Caco-2 (cell line): ENCODE measurements at regions of chr2 and their contacts with region 1.

Region 1: GRCh38 chr2:18378020-18378653 is 182.3 kb downstream of the RDH14 start:
- DNase-seq: peak; percentile 44 to 65
- H3K4me3 ChIP-seq: no peak overlapping the region
- H3K4me3 Mint-ChIP-seq: no peak overlapping the region
- H3K27ac Mint-ChIP-seq: no peak overlapping the region
- H3K4me1 ChIP-seq: 0 out of 2 replicates have a peak, but pooled peaks cover 4% of the 10 kb centered on the region
- H3K4me1 Mint-ChIP-seq: no peaks in the 10 kb centered on the region
- H3K27me3 ChIP-seq: no peaks in the 10 kb centered on the region
- H3K27me3 Mint-ChIP-seq: peaks cover 3% of the 10 kb centered on the region
- CTCF ChIP-seq: peak; percentile 82 to 91

Region 2: DNA sequence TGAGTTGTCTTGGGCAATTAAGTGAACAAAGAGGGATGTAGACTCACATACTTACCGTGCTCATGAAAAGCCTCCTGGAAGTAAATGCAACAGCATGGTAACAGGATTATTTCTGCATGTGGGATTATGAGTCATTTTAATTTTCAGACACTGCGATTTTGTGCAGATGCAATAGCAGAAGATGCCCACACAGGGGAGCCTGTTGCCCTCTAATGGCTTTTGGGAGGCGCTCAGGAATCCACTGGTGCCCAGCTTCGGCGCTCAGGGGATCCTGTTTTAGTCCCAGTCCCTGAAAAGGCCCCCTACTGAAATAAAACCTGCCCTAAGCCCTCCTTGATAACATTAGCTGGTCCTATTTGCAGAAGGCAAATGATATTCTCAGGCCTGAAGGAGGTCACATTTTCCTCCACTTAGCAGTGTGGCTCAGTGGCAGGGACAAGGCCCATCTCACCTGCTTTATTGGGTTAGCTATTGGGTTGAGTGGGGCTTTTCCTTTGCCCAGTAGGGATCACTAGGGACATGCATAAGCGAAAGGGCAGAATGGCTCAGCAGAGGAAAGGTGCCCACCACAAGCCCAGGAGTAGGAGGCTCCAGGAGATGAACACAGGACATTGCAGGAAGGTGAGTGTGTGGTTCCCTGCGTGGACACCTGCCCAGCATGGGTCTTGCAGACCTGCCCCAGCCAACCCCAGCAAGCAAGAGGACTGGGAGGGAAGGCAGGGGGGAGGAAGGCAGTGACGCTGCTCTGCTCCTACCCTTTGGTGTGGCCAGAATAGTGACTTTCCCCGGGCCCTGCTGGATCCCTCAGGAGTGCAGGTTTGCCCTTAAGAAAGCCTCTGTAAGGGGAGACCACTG is 526.2 kb before region 1 on chr2:
- CTCF ChIA-PET with region 1: no interaction called
- POLR2A ChIA-PET with region 1: no interaction called
- intact Hi-C with region 1: loop called (anchors 1 kb)
- DNase-seq: peak; percentile 56 to 58
- H3K4me3 ChIP-seq: no peak overlapping the region
- H3K4me3 Mint-ChIP-seq: no peak overlapping the region
- H3K27ac Mint-ChIP-seq: no peak overlapping the region
- H3K4me1 ChIP-seq: no peaks in the 10 kb centered on the region
- H3K4me1 Mint-ChIP-seq: no peaks in the 10 kb centered on the region
- H3K27me3 ChIP-seq: no peaks in the 10 kb centered on the region
- H3K27me3 Mint-ChIP-seq: peaks cover 5% of the 10 kb centered on the region
- CTCF ChIP-seq: peak; percentile 87 to 90

Region 3: GRCh38 chr2:17976871-17977746 is 401.0 kb before region 1 on chr2:
- CTCF ChIA-PET with region 1: no interaction called
- POLR2A ChIA-PET with region 1: no interaction called
- intact Hi-C with region 1: loop called (anchors 10 kb)
- DNase-seq: no peak
- H3K4me3 ChIP-seq: no peak overlapping the region
- H3K4me3 Mint-ChIP-seq: no peak overlapping the region
- H3K27ac Mint-ChIP-seq: no peak overlapping the region
- H3K4me1 ChIP-seq: no peaks in the 10 kb centered on the region
- H3K4me1 Mint-ChIP-seq: no peaks in the 10 kb centered on the region
- H3K27me3 ChIP-seq: no peaks in the 10 kb centered on the region
- H3K27me3 Mint-ChIP-seq: peaks cover 3% of the 10 kb centered on the region
- CTCF ChIP-seq: no peak

Region 4: GRCh38 chr2:18154818-18155217 is 223.3 kb before region 1 on chr2:
- CTCF ChIA-PET with region 1: no interaction called
- POLR2A ChIA-PET with region 1: no interaction called
- intact Hi-C with region 1: loop called (anchors 1 kb)
- DNase-seq: peak in 1 of 2 experiments; percentile 8
- H3K4me3 ChIP-seq: no peak overlapping the region
- H3K4me3 Mint-ChIP-seq: no peak overlapping the region
- H3K27ac Mint-ChIP-seq: no peak overlapping the region
- H3K4me1 ChIP-seq: no peaks in the 10 kb centered on the region
- H3K4me1 Mint-ChIP-seq: no peaks in the 10 kb centered on the region
- H3K27me3 ChIP-seq: no peaks in the 10 kb centered on the region
- H3K27me3 Mint-ChIP-seq: peaks cover 4% of the 10 kb centered on the region
- CTCF ChIP-seq: no peak

Region 5: DNA sequence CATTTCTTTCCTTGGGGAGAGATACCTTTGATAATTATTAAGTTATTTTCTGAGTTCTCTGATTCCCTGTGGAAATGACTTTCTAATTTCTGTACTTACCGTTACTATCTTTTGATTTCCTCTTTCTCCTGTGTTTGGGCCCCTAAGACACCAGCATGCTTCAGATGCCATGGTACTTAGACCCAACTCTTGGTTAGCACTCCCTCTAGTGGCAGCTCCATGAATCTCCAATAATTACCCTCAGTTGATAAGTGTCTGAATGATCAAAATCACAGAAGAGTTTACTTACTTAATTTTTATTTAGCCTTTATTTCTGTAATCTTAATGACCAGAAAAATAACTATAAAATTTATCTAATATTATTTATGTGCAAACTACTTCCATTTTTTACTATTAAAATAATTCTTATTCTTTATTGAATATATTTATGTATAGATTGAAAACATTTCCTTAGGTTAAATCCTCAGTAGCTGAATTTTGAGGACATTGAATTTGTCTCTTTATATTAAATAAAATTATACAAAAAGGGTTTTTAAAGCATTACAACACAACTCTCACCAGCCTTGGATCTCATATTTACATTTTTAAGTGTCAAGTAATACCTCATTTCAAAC is 199.3 kb before region 1 on chr2:
- CTCF ChIA-PET with region 1: no interaction called
- POLR2A ChIA-PET with region 1: no interaction called
- intact Hi-C with region 1: loop called (anchors 1 kb)
- DNase-seq: peak in 1 of 2 experiments; percentile 59
- H3K4me3 ChIP-seq: no peak overlapping the region
- H3K4me3 Mint-ChIP-seq: no peak overlapping the region
- H3K27ac Mint-ChIP-seq: no peak overlapping the region
- H3K4me1 ChIP-seq: no peaks in the 10 kb centered on the region
- H3K4me1 Mint-ChIP-seq: peaks cover 14% of the 10 kb centered on the region
- H3K27me3 ChIP-seq: no peaks in the 10 kb centered on the region
- H3K27me3 Mint-ChIP-seq: peaks cover 2% of the 10 kb centered on the region
- CTCF ChIP-seq: peak; percentile 76 to 80

Region 6: GRCh38 chr2:18208956-18209355 is 169.2 kb before region 1 on chr2:
- CTCF ChIA-PET with region 1: no interaction called
- POLR2A ChIA-PET with region 1: no interaction called
- intact Hi-C with region 1: no loop called
- DNase-seq: no peak
- H3K4me3 ChIP-seq: no peak overlapping the region
- H3K4me3 Mint-ChIP-seq: no peak overlapping the region
- H3K27ac Mint-ChIP-seq: no peak overlapping the region
- H3K4me1 ChIP-seq: peaks cover 30% of the 10 kb centered on the region
- H3K4me1 Mint-ChIP-seq: peaks cover 21% of the 10 kb centered on the region
- H3K27me3 ChIP-seq: no peaks in the 10 kb centered on the region
- H3K27me3 Mint-ChIP-seq: no peaks in the 10 kb centered on the region
- CTCF ChIP-seq: no peak

Region 7: GRCh38 chr2:18219676-18220075 is 158.5 kb before region 1 on chr2:
- CTCF ChIA-PET with region 1: interaction called, 3 read pairs
- POLR2A ChIA-PET with region 1: no interaction called
- intact Hi-C with region 1: loop called (anchors 1 kb)
- DNase-seq: no peak
- H3K4me3 ChIP-seq: no peak overlapping the region
- H3K4me3 Mint-ChIP-seq: no peak overlapping the region
- H3K27ac Mint-ChIP-seq: no peak overlapping the region
- H3K4me1 ChIP-seq: no peaks in the 10 kb centered on the region
- H3K4me1 Mint-ChIP-seq: no peaks in the 10 kb centered on the region
- H3K27me3 ChIP-seq: no peaks in the 10 kb centered on the region
- H3K27me3 Mint-ChIP-seq: no peaks in the 10 kb centered on the region
- CTCF ChIP-seq: peak in 1 of 2 experiments; percentile 29

Region 8: DNA sequence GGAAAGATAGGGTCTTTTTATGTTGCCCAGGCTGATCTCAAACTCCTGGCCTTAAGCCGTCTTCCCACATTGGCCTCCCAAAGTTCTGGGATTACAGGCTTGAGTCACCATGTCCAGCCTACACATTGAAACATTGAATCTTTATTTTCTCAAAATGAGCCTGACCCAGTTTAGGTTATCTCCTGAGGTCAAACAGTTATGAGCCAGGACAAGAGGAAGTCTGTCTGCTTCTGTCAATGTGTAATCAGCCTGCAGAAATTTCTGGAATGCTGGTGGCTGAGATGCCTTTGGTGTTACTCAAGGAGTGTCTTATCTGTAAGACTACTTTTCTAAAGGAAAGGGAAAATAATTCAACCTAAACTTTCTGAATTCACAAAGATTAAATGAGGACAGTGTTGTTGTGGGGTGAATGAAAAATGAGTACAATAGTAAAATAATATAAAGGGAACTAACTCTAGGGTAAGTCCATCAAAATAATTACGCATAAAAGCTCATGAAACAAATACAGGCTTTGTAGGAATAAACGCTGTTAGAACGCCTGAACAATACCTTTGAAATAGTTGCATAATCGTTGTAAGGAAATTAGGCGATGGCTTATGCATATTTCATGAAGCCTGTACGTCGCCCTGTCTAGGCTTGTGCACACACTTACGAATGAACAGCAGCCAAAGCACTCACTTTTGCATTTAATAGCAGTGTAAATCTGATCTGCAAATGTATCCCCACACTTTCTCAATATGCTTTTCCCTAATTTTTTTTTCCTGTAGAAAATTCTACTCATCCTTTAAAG is 78.5 kb before region 1 on chr2:
- CTCF ChIA-PET with region 1: no interaction called
- POLR2A ChIA-PET with region 1: no interaction called
- intact Hi-C with region 1: loop called (anchors 1 kb)
- DNase-seq: peak; percentile 85 to 91
- H3K4me3 ChIP-seq: 0 out of 2 replicates have a peak overlapping the region, but pooled peaks have one; percentile 9
- H3K4me3 Mint-ChIP-seq: peak overlapping the region; percentile 72
- H3K27ac Mint-ChIP-seq: peak overlapping the region; percentile 94
- H3K4me1 ChIP-seq: peaks cover 38% of the 10 kb centered on the region
- H3K4me1 Mint-ChIP-seq: peaks cover 18% of the 10 kb centered on the region
- H3K27me3 ChIP-seq: no peaks in the 10 kb centered on the region
- H3K27me3 Mint-ChIP-seq: no peaks in the 10 kb centered on the region
- CTCF ChIP-seq: no peak